ENCODE measurements at regions of chr12 and their contacts with region 1.

Region 1: GRCh38 chr12:122517877-122518276 is 8.9 kb downstream of the RSRC2 start:
- DNase-seq: peak; percentile 54
- H3K4me3 ChIP-seq: no peak overlapping the region
- H3K27ac ChIP-seq: no peak overlapping the region
- H3K4me1 ChIP-seq: peaks cover 6% of the 10 kb centered on the region
- H3K27me3 ChIP-seq: no peaks in the 10 kb centered on the region
- CTCF ChIP-seq: no peak

Region 2: GRCh38 chr12:121964813-121965643 is 552.8 kb before region 1 on chr12:
- CTCF ChIA-PET with region 1: no interaction called
- POLR2A ChIA-PET with region 1: no interaction called
- intact Hi-C with region 1: no loop called
- DNase-seq: peak; percentile 84
- H3K4me3 ChIP-seq: no peak overlapping the region
- H3K27ac ChIP-seq: no peak overlapping the region
- H3K4me1 ChIP-seq: peaks cover 19% of the 10 kb centered on the region
- H3K27me3 ChIP-seq: no peaks in the 10 kb centered on the region
- CTCF ChIP-seq: no peak

Region 3: GRCh38 chr12:122459211-122459610 is 58.7 kb before region 1 on chr12:
- CTCF ChIA-PET with region 1: no interaction called
- POLR2A ChIA-PET with region 1: no interaction called
- intact Hi-C with region 1: no loop called
- DNase-seq: no peak
- H3K4me3 ChIP-seq: no peak overlapping the region
- H3K27ac ChIP-seq: no peak overlapping the region
- H3K4me1 ChIP-seq: no peaks in the 10 kb centered on the region
- H3K27me3 ChIP-seq: no peaks in the 10 kb centered on the region
- CTCF ChIP-seq: no peak

Region 4: DNA sequence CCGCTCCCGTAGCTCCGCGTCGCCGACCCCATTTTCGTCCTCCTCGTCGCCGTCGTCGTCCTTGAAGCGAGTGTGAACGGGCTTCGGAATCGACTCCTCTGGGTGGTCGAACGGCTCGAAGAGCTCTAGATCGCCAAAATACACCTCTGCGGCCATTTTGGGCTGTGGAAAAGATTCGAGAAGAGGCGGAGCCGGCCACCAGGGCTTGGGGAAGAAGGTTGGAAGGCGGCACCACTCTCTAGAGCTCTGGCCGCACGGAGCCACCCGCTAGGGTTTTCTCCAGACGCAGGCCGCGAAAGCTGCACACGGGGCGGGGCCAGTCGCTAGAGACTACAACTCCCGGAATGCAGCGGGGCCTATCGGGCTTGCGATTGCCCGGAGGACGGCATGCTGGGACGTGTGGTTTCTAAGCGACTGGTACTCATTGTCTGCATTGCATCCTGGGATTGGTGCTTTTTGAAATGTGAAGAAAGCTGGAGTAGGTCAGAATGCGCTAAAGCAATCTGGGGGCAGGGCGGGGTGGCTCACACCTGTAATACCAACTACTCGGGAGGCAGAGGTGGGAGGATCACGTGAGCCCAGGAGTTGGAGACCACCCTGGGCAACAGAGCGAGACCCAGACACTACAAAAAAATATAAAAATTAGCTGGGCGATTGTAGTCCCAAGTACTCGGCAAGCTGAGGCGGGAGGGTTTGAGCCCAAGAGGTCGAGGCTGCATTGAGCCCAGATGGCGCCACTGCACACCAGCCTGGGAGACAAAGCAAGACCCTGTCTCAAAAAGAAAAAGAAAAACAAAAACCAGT is 17.0 kb before region 1 on chr12 and contains the start of gene ZCCHC8:
- CTCF ChIA-PET with region 1: no interaction called
- POLR2A ChIA-PET with region 1: interaction called, 5 read pairs
- intact Hi-C with region 1: loop called (anchors 2 kb)
- DNase-seq: peak; percentile 99
- H3K4me3 ChIP-seq: peak within 1 kb of the TSS; percentile 85
- H3K27ac ChIP-seq: peak within 1 kb of the TSS; percentile 99
- H3K4me1 ChIP-seq: peaks cover 25% of the 10 kb centered on the region
- H3K27me3 ChIP-seq: no peaks in the 10 kb centered on the region
- CTCF ChIP-seq: no peak
- total RNA-seq, gene ZCCHC8: 40.4 and 41.1 TPM in 2 replicates

Region 5: DNA sequence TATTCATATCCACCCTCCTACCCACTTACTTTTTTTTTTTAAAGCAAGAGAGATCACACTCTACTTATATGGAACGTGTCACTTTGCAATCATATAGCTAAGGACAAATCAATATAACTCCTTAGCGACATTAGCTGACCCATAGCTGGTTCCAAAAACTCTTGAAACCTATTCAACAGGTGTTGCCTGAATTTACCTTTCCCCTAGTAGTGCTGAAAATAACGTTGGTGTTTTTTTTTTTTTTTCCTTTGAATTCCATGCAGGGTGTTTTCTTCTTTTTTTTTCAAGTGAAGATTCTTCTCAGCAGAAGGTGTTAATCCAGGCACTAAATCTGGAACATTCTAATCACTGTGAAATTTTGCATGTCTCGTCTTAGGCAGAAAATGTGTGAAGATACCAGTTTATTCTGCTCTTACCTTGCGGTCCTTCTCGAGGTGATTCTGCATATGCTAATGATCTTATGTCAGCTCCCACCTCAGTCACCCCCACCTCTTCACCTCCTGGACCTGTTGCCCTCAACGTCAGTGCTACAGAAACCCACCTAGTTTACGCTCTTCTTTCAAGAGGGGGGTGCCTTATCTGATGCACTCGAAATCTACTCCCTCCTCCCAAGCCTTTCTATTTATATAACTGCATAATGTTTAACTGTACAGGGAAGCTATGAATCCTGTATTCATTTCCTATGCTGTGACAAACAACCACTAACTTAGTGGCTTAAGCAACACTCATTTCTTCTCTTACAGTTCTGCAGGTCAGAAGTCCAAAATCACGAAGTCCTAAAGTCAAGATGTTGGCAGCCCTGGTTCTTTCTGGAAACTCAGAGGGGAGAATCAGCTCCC is 385.2 kb after region 1 on chr12:
- CTCF ChIA-PET with region 1: no interaction called
- POLR2A ChIA-PET with region 1: interaction called, 11 read pairs
- intact Hi-C with region 1: no loop called
- DNase-seq: no peak
- H3K4me3 ChIP-seq: no peak overlapping the region
- H3K27ac ChIP-seq: no peak overlapping the region
- H3K4me1 ChIP-seq: no peaks in the 10 kb centered on the region
- H3K27me3 ChIP-seq: no peaks in the 10 kb centered on the region
- CTCF ChIP-seq: no peak

Region 6: DNA sequence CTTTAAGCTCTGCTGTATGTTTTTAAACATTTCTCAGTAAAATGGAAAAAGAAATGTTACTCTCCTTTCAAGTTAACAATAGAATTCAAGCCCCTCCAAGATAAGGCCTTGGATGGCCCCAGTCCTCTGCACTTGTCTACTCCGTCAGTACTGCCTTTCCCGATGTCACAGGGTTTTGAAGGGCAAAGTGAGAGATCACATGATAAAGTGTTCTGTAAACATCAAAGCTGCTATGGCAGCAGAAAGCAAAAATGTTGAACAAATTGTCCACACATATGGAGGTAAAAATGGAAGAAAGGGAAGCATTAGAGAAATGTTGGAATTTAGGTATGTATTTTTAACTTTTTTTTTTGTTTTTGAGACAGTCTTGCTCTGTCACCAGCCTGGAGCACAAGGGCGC is 787.3 kb after region 1 on chr12:
- CTCF ChIA-PET with region 1: no interaction called
- POLR2A ChIA-PET with region 1: no interaction called
- intact Hi-C with region 1: no loop called
- DNase-seq: no peak
- H3K4me3 ChIP-seq: no peak overlapping the region
- H3K27ac ChIP-seq: no peak overlapping the region
- H3K4me1 ChIP-seq: no peaks in the 10 kb centered on the region
- H3K27me3 ChIP-seq: no peaks in the 10 kb centered on the region
- CTCF ChIP-seq: no peak

Measured in A673 (cell line).